Activated CD4-positive, alpha-beta T cell treated with anti-CD3 and anti-CD28 coated beads for 36 hours (primary cell): ENCODE measurements at regions of chr19 and their contacts with region 1.

Region 1: DNA sequence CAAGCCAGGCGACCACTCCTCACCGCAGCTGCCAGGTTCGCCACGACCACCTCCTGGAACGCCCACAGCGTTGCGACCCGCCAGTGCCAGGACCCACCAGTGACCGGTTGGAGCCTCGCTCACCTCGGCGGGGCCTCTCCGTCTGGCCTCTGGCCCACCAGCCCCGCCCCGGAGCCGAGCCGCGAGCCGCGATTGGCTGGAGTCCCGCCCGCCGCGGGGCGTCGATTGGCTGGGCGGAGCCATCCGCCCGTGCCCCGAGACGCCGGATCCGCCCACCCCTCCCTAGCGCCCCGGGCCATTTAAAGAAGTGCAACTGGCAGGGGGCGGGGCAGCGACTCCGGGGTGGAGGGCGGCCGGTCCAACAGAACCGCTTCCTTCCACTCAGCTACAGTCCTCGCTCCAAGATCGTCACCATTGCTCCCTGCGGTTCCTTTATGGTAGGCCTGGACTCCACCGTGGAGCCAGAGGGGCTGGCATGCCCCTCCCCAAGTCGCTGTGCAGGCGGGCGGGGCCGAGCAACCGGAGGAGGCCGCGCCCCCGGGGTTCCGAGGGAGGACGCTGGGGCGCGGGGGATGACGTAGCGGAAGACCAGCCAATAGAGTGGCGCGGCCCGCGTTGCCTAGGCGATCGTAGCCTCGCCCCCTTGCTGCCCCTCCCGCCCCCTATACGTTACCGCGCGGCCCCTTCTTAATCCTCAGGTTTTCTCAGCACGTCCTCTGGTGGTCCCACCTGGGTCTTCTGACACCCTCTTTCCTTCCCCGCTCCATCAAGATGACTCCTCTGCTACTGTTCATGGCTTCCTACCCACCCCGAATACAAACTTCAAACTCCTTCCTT is at the start of gene SERTAD3:
- DNase-seq: peak; percentile 98
- ATAC-seq: peak; percentile 70
- H3K4me3 Mint-ChIP-seq: peak within 1 kb of the TSS; percentile 96
- H3K27ac Mint-ChIP-seq: peak within 1 kb of the TSS; percentile 96
- H3K4me1 Mint-ChIP-seq: peaks cover 16% of the 10 kb centered on the region
- H3K27me3 Mint-ChIP-seq: no peaks in the 10 kb centered on the region
- total RNA-seq, gene SERTAD3: 8.4 to 12.0 TPM

Region 2: GRCh38 chr19:39833464-39834286 is 610.7 kb before region 1 on chr19 and contains the start of gene DYRK1B:
- CTCF ChIA-PET with region 1: no interaction called
- POLR2A ChIA-PET with region 1: no interaction called
- intact Hi-C with region 1: loop called in 1 of 2 experiments (anchors 5 kb)
- DNase-seq: peak; percentile 99
- ATAC-seq: peak; percentile 92
- H3K4me3 Mint-ChIP-seq: peak within 1 kb of the TSS; percentile 64
- H3K27ac Mint-ChIP-seq: peak within 1 kb of the TSS; percentile 84
- H3K4me1 Mint-ChIP-seq: peaks cover 25% of the 10 kb centered on the region
- H3K27me3 Mint-ChIP-seq: no peaks in the 10 kb centered on the region
- total RNA-seq, gene DYRK1B: 4.8 to 6.9 TPM

Region 3: DNA sequence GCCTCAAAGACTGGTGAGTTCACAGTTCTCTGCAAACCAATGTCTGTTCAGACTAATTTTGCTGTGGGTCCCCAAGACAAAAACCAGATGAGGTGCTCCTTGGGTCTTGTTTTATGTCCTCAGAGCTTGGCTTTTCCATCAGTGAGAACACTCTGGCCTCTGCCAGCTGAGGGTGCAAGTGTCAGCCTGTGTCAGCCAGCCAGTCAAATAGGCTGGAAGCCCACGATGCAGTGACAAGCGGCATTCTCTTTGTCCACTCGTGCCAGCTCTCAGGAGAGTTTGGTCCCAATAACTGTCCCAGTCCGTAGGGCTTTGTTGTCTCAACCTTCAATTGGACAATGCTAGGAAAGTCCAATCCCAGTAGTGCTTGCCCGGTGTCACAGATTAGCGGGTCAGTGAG is 149.8 kb before region 1 on chr19:
- CTCF ChIA-PET with region 1: no interaction called
- POLR2A ChIA-PET with region 1: no interaction called
- intact Hi-C with region 1: no loop called
- DNase-seq: no peak
- ATAC-seq: no peak
- H3K4me3 Mint-ChIP-seq: no peak overlapping the region
- H3K27ac Mint-ChIP-seq: no peak overlapping the region
- H3K4me1 Mint-ChIP-seq: no peaks in the 10 kb centered on the region
- H3K27me3 Mint-ChIP-seq: no peaks in the 10 kb centered on the region

Region 4: GRCh38 chr19:40348125-40348913 is 96.1 kb before region 1 on chr19 and contains the starts of genes C19orf47 and PLD3:
- CTCF ChIA-PET with region 1: no interaction called
- POLR2A ChIA-PET with region 1: no interaction called
- intact Hi-C with region 1: loop called (anchors 1 kb)
- DNase-seq: peak; percentile 100
- ATAC-seq: peak; percentile 97
- H3K4me3 Mint-ChIP-seq: peak within 1 kb of the TSS; percentile 96
- H3K27ac Mint-ChIP-seq: peak within 1 kb of the TSS; percentile 91
- H3K4me1 Mint-ChIP-seq: peaks cover 26% of the 10 kb centered on the region
- H3K27me3 Mint-ChIP-seq: no peaks in the 10 kb centered on the region
- total RNA-seq, gene C19orf47: 15.8 to 17.7 TPM
- total RNA-seq, gene PLD3: 57.8 to 69.1 TPM

Region 5: DNA sequence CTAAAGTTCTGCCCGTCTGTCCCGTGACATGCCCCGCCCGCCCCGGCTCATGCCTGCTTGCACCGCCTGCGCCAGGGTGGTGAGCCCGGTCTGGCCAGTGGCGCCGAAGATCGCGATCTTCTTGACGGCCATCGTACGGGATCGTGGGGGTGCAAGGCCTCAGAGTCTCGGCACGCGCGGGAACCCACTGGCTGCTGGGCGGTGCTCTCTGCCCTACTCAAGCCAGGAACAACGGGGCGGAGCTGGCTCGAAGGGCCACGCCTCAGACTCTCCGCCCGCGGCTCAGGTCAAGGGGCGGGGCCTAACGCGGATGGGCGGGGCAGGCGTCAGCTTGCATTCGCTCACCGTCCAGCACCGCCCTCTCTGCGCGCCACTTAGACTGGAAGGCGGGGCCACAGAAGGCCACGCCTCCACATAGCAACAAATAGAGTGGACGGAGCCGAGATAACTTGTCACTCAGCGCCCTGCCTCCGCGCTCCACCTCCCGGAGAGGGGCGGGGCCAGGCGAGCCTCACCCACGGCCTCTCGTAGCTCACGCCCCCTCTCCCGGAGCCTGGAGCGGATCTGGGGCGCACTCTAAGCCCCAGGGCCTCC is 21.2 kb after region 1 on chr19 and contains the start of gene BLVRB:
- CTCF ChIA-PET with region 1: interaction called, 21 read pairs
- POLR2A ChIA-PET with region 1: interaction called, 4 read pairs
- intact Hi-C with region 1: loop called (anchors 1 kb)
- DNase-seq: peak; percentile 100
- ATAC-seq: peak; percentile 84
- H3K4me3 Mint-ChIP-seq: peak within 1 kb of the TSS; percentile 77
- H3K27ac Mint-ChIP-seq: peak within 1 kb of the TSS; percentile 87
- H3K4me1 Mint-ChIP-seq: peaks cover 30% of the 10 kb centered on the region
- H3K27me3 Mint-ChIP-seq: peaks cover 11% of the 10 kb centered on the region
- total RNA-seq, gene BLVRB: 34.1 to 35.6 TPM

Region 6: DNA sequence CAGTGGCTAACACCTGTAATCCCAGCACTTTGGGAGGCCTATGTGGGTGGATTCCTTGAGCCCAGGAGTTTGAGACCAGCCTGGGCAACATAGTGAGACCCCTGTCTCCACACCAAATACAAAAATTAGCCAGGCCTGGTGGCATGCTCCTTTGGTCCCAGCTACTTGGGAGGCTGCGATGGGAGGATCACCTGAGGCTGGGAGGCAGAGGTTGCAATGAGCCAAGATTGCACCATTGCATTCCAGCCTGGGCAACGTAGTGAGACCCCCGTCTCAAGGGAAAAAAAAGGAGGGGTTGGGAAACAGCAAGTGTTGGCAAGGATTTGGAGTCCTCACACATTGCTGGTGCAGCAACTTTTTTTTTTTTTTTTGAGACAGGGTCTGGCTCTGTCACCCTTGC is 41.6 kb after region 1 on chr19:
- CTCF ChIA-PET with region 1: no interaction called
- POLR2A ChIA-PET with region 1: no interaction called
- intact Hi-C with region 1: no loop called
- DNase-seq: no peak
- ATAC-seq: no peak
- H3K4me3 Mint-ChIP-seq: no peak overlapping the region
- H3K27ac Mint-ChIP-seq: no peak overlapping the region
- H3K4me1 Mint-ChIP-seq: no peaks in the 10 kb centered on the region
- H3K27me3 Mint-ChIP-seq: peaks cover 13% of the 10 kb centered on the region

Region 7: GRCh38 chr19:40502647-40503319 is 58.4 kb after region 1 on chr19:
- CTCF ChIA-PET with region 1: no interaction called
- POLR2A ChIA-PET with region 1: no interaction called
- intact Hi-C with region 1: no loop called
- DNase-seq: no peak
- ATAC-seq: no peak
- H3K4me3 Mint-ChIP-seq: no peak overlapping the region
- H3K27ac Mint-ChIP-seq: no peak overlapping the region
- H3K4me1 Mint-ChIP-seq: no peaks in the 10 kb centered on the region
- H3K27me3 Mint-ChIP-seq: no peaks in the 10 kb centered on the region

Region 8: DNA sequence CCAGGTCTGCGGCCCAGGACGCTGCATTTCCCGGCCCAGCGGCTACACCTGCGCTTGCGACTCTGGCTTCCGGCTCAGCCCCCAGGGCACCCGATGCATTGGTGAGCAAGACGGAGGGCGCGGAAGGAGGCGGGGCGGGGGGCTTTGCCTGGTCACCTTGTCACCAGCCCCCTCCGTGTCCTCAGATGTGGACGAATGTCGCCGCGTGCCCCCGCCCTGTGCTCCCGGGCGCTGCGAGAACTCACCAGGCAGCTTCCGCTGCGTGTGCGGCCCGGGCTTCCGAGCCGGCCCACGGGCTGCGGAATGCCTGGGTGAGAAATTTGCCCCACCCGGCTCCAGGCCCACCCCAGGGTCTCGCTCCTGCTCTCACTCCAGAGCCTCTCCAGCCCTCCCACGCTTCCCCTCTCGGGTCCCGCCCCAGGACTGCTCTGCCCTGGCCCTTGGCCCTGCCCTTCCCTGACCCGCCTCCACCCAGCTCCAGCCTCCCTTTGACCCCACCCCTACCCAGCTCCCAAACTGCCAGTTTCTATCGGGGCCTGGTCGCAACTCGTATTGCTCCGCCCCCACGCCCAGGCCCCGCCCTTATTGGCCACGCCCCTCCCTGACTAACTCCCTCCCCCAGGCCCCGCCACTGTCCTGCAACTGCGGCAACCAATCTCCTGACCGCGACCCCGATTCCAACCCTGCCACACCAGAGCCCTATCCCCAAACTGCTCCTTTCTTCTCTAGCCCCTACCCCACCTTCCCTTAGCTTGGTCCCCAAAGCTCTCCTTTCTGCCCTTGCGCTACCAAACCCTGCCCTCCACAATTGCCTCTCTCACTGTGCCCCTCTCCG is 165.4 kb after region 1 on chr19:
- CTCF ChIA-PET with region 1: interaction called, 3 read pairs
- POLR2A ChIA-PET with region 1: no interaction called
- intact Hi-C with region 1: loop called in 1 of 2 experiments (anchors 1 kb)
- DNase-seq: peak; percentile 97
- ATAC-seq: peak; percentile 54
- H3K4me3 Mint-ChIP-seq: peak overlapping the region; percentile 69
- H3K27ac Mint-ChIP-seq: peak overlapping the region; percentile 97
- H3K4me1 Mint-ChIP-seq: peaks cover 63% of the 10 kb centered on the region
- H3K27me3 Mint-ChIP-seq: no peaks in the 10 kb centered on the region

Region 9: GRCh38 chr19:40750059-40750873 is 305.9 kb after region 1 on chr19 and contains the start of gene ACTMAP:
- CTCF ChIA-PET with region 1: no interaction called
- POLR2A ChIA-PET with region 1: no interaction called
- intact Hi-C with region 1: loop called in 1 of 2 experiments (anchors 1 kb)
- DNase-seq: peak; percentile 100
- ATAC-seq: peak; percentile 90
- H3K4me3 Mint-ChIP-seq: peak within 1 kb of the TSS; percentile 81
- H3K27ac Mint-ChIP-seq: peak within 1 kb of the TSS; percentile 99
- H3K4me1 Mint-ChIP-seq: peaks cover 34% of the 10 kb centered on the region
- H3K27me3 Mint-ChIP-seq: no peaks in the 10 kb centered on the region
- total RNA-seq, gene ACTMAP: 15.0 to 18.0 TPM

Region 10: DNA sequence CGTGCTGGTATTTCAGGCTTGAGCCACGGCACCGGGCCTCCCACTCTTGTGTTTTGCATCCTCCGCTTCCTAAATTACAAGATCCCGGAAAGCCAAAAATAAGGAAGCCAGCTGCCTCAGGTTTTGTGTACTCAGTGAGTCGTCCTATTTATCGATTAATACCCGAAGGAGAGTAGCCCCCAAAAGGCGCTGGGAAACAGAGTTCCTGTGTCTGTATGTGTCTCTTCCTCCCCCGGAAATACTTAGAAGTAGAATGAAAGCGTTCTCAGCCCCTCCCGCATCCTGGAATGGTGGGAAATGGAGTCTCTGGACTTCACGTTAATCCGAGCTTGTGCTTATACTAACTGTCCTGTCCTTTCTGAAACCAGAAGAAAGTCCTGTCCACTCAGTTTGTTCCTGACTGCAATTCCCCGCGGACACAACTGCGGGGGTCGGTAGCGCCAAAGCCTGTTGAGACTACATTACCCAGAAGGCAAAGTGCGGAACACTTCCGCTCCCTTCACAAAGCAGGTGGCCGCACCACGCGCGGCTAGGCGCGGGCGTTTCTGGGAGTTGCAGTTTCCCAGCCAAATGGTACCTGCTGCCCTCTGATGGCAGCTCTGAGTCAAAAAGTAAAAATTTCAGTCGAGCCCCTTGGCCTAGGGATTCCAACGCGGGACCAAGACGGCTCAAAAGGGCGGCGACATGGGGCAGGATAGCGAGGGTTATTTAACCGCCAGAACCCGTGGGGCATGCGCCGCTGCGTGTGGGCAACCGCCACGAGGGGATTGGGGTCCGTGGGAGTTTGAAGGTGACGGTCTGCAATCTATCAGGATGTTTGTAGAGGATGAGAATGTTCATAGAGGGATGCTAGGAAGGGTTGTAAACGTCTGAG is 1800.2 kb after region 1 on chr19:
- CTCF ChIA-PET with region 1: no interaction called
- POLR2A ChIA-PET with region 1: no interaction called
- intact Hi-C with region 1: loop called in 1 of 2 experiments (anchors 2 kb)
- DNase-seq: peak; percentile 96
- ATAC-seq: peak; percentile 49
- H3K4me3 Mint-ChIP-seq: peak overlapping the region; percentile 93
- H3K27ac Mint-ChIP-seq: peak overlapping the region; percentile 94
- H3K4me1 Mint-ChIP-seq: peaks cover 42% of the 10 kb centered on the region
- H3K27me3 Mint-ChIP-seq: no peaks in the 10 kb centered on the region